T-cell (primary cell): ENCODE measurements at regions of chr1 and their contacts with region 1.

Region 1: DNA sequence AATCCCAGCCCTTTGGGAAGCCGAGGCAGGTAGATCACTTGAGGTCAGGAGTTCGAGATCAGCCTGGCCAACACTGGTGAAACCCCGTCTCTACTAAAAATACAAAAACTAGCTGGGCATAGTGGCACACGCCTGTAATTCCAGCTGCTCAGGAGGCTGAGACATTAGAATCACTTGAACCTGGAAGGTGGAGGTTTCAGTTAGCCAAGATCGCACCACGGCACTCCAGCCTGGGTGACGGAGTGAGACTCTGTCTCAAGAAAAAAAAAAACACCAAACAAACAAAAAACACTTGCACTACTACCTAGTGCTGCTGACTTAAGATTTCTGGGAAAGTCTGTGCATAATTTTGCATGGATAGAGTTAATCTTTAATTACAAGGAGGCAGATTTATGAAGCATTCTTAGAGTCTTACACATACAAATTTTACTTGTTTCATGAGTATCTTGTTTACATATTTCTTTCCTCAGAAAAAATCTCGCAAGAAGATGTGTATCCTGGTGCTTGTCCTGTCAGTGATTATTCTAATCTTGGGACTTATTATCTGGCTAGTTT is 8.7 kb upstream of the PPP1R8 start:
- DNase-seq: no peak
- ATAC-seq: no peak
- H3K4me3 ChIP-seq: no peak overlapping the region
- H3K4me3 Mint-ChIP-seq: no peak overlapping the region
- H3K27ac ChIP-seq: no peak overlapping the region
- H3K27ac Mint-ChIP-seq: no peak overlapping the region
- H3K4me1 ChIP-seq: no peaks in the 10 kb centered on the region
- H3K4me1 Mint-ChIP-seq: no peaks in the 10 kb centered on the region
- H3K27me3 ChIP-seq: no peaks in the 10 kb centered on the region
- H3K27me3 Mint-ChIP-seq: no peaks in the 10 kb centered on the region

Region 2: DNA sequence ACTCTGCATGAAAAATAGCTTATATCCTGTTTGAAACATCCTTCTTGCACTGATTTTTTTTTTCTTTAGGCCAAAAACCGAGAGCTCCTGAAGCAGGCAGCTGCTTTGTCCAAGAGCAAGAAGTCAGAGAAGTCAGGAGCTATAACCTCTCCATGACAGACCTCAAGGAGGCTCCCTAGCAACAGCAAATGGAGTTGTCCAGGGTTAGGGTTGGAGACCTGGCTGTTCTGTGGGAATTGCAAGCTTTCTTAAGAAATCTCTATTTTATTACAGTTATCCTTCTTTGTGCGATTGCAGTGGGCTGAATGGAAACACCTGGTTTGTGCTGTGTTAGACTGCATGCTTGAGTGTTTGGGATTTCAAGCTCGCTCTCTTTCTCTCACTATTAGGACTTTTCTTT is 61.4 kb before region 1 on chr1:
- CTCF ChIA-PET with region 1: no interaction called
- POLR2A ChIA-PET with region 1: no interaction called
- DNase-seq: no peak
- ATAC-seq: no peak
- H3K4me3 ChIP-seq: no peak overlapping the region
- H3K4me3 Mint-ChIP-seq: no peak overlapping the region
- H3K27ac ChIP-seq: no peak overlapping the region
- H3K27ac Mint-ChIP-seq: no peak overlapping the region
- H3K4me1 ChIP-seq: no peaks in the 10 kb centered on the region
- H3K4me1 Mint-ChIP-seq: no peaks in the 10 kb centered on the region
- H3K27me3 ChIP-seq: no peaks in the 10 kb centered on the region
- H3K27me3 Mint-ChIP-seq: no peaks in the 10 kb centered on the region

Region 3: GRCh38 chr1:27959400-27960217 is 137.8 kb after region 1 on chr1 and contains the start of gene XKR8:
- CTCF ChIA-PET with region 1: no interaction called
- POLR2A ChIA-PET with region 1: no interaction called
- DNase-seq: peak; percentile 71 to 90 (median 81)
- ATAC-seq: peak; percentile 99
- H3K4me3 ChIP-seq: peak within 1 kb of the TSS; percentile 69 to 77
- H3K4me3 Mint-ChIP-seq: peak within 1 kb of the TSS; percentile 84 to 87 (median 84)
- H3K27ac ChIP-seq: peak within 1 kb of the TSS; percentile 67
- H3K27ac Mint-ChIP-seq: peak within 1 kb of the TSS; percentile 92 to 94
- H3K4me1 ChIP-seq: peaks cover 5 to 32% of the 10 kb centered on the region in 2 experiments
- H3K4me1 Mint-ChIP-seq: peaks cover 29 to 32% (median 32%) of the 10 kb centered on the region in 3 donors
- H3K27me3 ChIP-seq: peaks cover 0 to 11% of the 10 kb centered on the region in 2 experiments
- H3K27me3 Mint-ChIP-seq: no peaks in the 10 kb centered on the region
- total RNA-seq, gene XKR8: 7.7 to 18.3 (median 14.4) TPM

Region 4: DNA sequence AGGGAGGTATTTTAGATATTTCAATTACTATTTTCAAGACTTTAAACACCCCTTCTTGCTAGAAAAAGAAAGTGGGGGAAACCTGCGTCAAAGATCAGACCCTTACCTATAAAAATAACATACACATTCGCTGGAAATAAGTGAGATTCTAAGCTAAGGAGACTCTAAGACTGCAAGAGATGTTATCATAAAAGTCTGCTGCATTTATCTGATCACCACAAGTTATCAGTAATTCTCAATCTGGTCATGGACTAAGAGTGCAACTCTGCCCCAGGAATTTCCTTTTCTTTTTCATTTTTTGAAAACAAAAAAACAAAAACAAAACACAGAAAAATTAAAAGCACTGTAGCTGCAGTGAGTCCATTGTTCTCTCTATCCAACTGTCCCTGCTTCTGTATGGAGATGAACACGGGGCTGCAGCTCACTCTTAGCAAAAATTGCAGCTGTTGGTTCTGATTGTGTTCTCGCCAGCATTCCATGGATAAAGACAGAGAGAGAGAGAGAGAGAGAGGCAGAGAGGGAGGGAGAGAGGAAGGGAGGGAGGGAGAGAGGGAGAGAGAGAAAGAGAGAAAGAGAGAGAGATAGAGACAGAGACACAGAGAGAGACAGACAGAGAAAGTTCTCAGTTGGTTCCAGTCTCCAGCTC is 152.1 kb after region 1 on chr1:
- CTCF ChIA-PET with region 1: interaction called in 1 of 2 experiments, 15 read pairs
- POLR2A ChIA-PET with region 1: no interaction called
- DNase-seq: no peak
- ATAC-seq: no peak
- H3K4me3 ChIP-seq: no peak overlapping the region
- H3K4me3 Mint-ChIP-seq: no peak overlapping the region
- H3K27ac ChIP-seq: no peak overlapping the region
- H3K27ac Mint-ChIP-seq: no peak overlapping the region
- H3K4me1 ChIP-seq: no peaks in the 10 kb centered on the region
- H3K4me1 Mint-ChIP-seq: peaks cover 6 to 28% (median 13%) of the 10 kb centered on the region in 3 donors
- H3K27me3 ChIP-seq: no peaks in the 10 kb centered on the region
- H3K27me3 Mint-ChIP-seq: no peaks in the 10 kb centered on the region